ENCODE measurements at regions of chr10 and their contacts with region 1.

Region 1: GRCh38 chr10:70493660-70494234 is 15.2 kb downstream of the PALD1 start:
- DNase-seq: no peak
- H3K4me3 Mint-ChIP-seq: no peak overlapping the region
- H3K27ac Mint-ChIP-seq: peak overlapping the region; percentile 47
- H3K4me1 Mint-ChIP-seq: peaks cover 31% of the 10 kb centered on the region
- H3K27me3 Mint-ChIP-seq: peaks cover 6% of the 10 kb centered on the region

Region 2: GRCh38 chr10:70348228-70348850 is 145.4 kb before region 1 on chr10:
- intact Hi-C with region 1: no loop called
- DNase-seq: no peak
- H3K4me3 Mint-ChIP-seq: no peak overlapping the region
- H3K27ac Mint-ChIP-seq: no peak overlapping the region
- H3K4me1 Mint-ChIP-seq: peaks cover 2% of the 10 kb centered on the region
- H3K27me3 Mint-ChIP-seq: no peaks in the 10 kb centered on the region

Region 3: DNA sequence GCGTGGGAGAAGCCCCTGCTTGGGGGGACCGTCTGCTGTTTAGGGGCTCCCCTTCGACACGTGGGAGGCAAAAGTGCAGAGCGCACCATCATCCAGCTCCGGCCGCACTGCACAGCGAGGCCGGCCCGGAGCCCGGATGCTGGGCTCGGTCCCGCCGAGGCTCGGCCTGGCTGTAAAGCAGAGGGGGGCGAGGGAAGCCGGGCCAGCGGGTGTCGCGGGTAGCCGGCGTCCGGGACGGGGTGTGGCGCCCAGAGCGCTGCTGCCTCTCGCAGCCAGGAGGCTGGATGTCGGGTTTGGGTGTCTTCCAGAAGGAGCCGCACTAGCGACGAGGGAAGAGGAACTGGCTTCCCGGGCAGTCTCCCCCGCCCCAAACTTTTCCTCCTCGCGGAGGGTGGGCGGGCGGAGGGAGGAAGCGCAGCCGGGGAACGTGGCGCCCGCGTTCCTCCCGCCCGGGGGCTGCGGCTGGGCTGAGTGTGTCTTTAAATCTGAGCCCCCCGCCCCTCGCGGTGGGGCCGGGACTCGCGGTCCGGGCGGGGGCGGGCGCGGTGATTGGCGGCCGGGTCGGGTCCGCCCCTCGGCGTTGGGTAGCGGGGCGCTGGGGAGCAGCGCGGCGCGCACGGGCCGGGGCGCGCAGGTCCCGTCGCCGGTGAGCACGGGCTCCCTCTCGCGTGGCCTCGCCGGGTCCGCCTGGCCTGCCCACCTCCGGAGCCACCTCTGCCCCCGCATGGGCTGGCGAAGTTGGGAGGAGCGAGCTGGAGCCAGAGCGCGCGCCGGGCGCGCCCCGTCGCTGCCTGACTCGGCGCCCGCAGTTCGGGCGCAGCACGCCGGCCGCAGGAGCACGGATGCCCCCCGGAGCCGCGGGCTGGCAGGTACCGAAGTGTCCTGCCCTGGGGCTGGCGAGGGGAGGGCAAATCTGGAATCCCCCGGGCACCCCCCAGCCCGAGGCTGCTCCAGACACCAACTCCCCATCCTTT is 15.3 kb before region 1 on chr10 and contains the start of gene PALD1:
- intact Hi-C with region 1: loop called (anchors 2 kb)
- DNase-seq: no peak
- H3K4me3 Mint-ChIP-seq: peak within 1 kb of the TSS; percentile 80
- H3K27ac Mint-ChIP-seq: peak within 1 kb of the TSS; percentile 55
- H3K4me1 Mint-ChIP-seq: peaks cover 33% of the 10 kb centered on the region
- H3K27me3 Mint-ChIP-seq: peaks cover 49% of the 10 kb centered on the region
- total RNA-seq, gene PALD1: 2.1 and 2.3 TPM in 2 replicates

Measured in activated T-helper 2 cell treated with anti-CD3 and anti-CD28 coated beads, Interferon-gamma antibody, Interleukin-2, Interleukin-4, amounts not matched to agents 10 μg/mL and 5 μg/mL and 100 μg/mL, durations not matched to agents 14 hours and 24 hours and 36 hours (primary cell).